ENCODE measurements at regions of chr6 and their contacts with region 1.

Region 1: GRCh38 chr6:73604020-73604419 is 49.8 kb downstream of the SLC17A5 start:
- H3K4me3 Mint-ChIP-seq: no peak overlapping the region
- H3K27ac Mint-ChIP-seq: no peak overlapping the region
- H3K4me1 Mint-ChIP-seq: no peaks in the 10 kb centered on the region
- H3K27me3 Mint-ChIP-seq: no peaks in the 10 kb centered on the region

Region 2: GRCh38 chr6:73282876-73283275 is 321.1 kb before region 1 on chr6:
- intact Hi-C with region 1: no loop called
- H3K4me3 Mint-ChIP-seq: no peak overlapping the region
- H3K27ac Mint-ChIP-seq: no peak overlapping the region
- H3K4me1 Mint-ChIP-seq: peaks cover 13% of the 10 kb centered on the region
- H3K27me3 Mint-ChIP-seq: no peaks in the 10 kb centered on the region

Region 3: DNA sequence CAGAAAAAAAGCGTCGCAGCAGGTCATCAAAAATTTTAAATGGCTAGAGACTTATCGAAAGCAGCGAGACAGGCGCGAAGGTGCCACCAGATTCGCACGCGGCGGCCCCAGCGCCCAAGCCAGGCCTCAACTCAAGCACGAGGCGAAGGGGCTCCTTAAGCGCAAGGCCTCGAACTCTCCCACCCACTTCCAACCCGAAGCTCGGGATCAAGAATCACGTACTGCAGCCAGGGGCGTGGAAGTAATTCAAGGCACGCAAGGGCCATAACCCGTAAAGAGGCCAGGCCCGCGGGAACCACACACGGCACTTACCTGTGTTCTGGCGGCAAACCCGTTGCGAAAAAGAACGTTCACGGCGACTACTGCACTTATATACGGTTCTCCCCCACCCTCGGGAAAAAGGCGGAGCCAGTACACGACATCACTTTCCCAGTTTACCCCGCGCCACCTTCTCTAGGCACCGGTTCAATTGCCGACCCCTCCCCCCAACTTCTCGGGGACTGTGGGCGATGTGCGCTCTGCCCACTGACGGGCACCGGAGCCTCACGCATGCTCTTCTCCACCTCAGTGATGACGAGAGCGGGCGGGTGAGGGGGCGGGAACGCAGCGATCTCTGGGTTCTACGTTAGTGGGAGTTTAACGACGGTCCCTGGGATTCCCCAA is 83.2 kb before region 1 on chr6 and contains the start of gene EEF1A1:
- intact Hi-C with region 1: loop called (anchors 5 kb)
- H3K4me3 Mint-ChIP-seq: peak within 1 kb of the TSS; percentile 99
- H3K27ac Mint-ChIP-seq: peak within 1 kb of the TSS; percentile 100
- H3K4me1 Mint-ChIP-seq: peaks cover 37% of the 10 kb centered on the region
- H3K27me3 Mint-ChIP-seq: no peaks in the 10 kb centered on the region

Region 4: GRCh38 chr6:73560182-73560732 is 43.8 kb before region 1 on chr6:
- intact Hi-C with region 1: loop called (anchors 5 kb)
- H3K4me3 Mint-ChIP-seq: no peak overlapping the region
- H3K27ac Mint-ChIP-seq: peak overlapping the region; percentile 74
- H3K4me1 Mint-ChIP-seq: peaks cover 40% of the 10 kb centered on the region
- H3K27me3 Mint-ChIP-seq: no peaks in the 10 kb centered on the region

Region 5: GRCh38 chr6:73580247-73581149 is 23.5 kb before region 1 on chr6:
- intact Hi-C with region 1: loop called (anchors 2 kb)
- H3K4me3 Mint-ChIP-seq: peak overlapping the region; percentile 71
- H3K27ac Mint-ChIP-seq: peak overlapping the region; percentile 99
- H3K4me1 Mint-ChIP-seq: peaks cover 36% of the 10 kb centered on the region
- H3K27me3 Mint-ChIP-seq: no peaks in the 10 kb centered on the region

Region 6: DNA sequence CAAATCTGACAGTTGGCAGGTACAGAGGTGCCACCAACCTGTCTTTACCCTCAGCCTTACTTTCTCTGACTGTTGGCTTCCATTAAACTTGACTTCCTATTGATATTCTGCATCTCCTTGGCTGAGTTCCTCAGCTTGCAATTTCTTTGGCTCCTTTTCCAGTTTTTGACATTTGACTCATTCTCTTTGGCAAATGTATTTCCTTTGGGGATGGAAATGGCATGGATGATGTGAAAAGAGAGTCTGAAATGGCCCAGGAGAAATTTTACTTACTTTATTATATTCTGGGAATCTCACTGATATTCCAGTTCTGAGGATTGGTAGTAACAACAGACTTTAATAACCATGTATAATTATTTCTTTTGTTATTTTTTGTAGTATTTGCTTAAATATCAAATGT is 347.2 kb after region 1 on chr6:
- intact Hi-C with region 1: no loop called
- H3K4me3 Mint-ChIP-seq: no peak overlapping the region
- H3K27ac Mint-ChIP-seq: no peak overlapping the region
- H3K4me1 Mint-ChIP-seq: no peaks in the 10 kb centered on the region
- H3K27me3 Mint-ChIP-seq: no peaks in the 10 kb centered on the region